Dorsolateral prefrontal cortex (tissue), 120 donors: ENCODE measurements at regions of chr10 and their contacts with region 1.

Region 1: DNA sequence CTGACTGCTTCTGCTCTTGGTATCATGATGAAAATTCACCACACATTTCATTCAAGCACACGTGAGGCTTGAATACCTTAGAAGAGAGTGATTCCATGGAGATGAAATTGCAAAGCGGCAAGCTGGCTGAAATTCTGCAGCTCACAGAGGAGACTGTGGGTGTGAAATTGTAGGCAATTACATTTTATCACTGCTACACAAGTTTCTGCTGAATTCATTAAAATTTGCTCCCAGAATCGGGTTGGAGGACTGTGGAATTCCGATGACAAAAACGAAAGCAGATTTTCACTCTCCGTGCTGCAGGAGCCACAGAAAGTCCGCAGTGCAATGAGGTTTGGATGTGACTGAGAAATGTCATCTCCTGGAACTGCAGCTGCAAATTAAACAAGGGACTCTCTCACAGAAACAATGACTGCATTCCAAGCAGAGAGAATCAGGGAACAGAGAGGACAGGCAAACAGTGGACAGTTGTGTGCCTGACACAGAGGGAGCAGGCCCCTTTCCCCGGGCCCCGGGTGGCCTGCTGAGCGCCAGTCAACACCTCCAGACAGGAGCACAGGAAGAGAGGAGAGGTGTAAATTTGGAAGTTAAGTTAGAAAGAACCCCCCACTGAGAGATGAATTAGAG is 109.1 kb downstream of the C10orf90 start:
- DNase-seq: peak in 9 of 10 donors; percentile 46 to 78 (median 62)
- H3K4me3 ChIP-seq: peak overlapping the region in 58 of 59 donors; percentile 4 to 65 (median 47)
- H3K27ac ChIP-seq: peak overlapping the region; percentile 86 to 100 (median 98)
- H3K27me3 ChIP-seq: no peaks in the 10 kb centered on the region
- CTCF ChIP-seq: peak in 13 of 56 donors; percentile 6 to 51 (median 20)

Region 2: GRCh38 chr10:126521354-126521753 is 40.1 kb before region 1 on chr10:
- intact Hi-C with region 1: loop called in 1 of 2 experiments (anchors 5 kb)
- DNase-seq: no peak
- H3K4me3 ChIP-seq: no peak overlapping the region
- H3K27ac ChIP-seq: peak overlapping the region in 5 of 59 donors; percentile 7 to 45 (median 34)
- H3K27me3 ChIP-seq: peaks cover 0 to 6% (median 0%) of the 10 kb centered on the region in 45 donors
- CTCF ChIP-seq: no peak

Region 3: GRCh38 chr10:126598003-126598402 is 36.6 kb after region 1 on chr10:
- intact Hi-C with region 1: loop called in 1 of 2 experiments (anchors 5 kb)
- DNase-seq: peak in 7 of 10 donors; percentile 38 to 75 (median 59)
- H3K4me3 ChIP-seq: no peak overlapping the region
- H3K27ac ChIP-seq: peak overlapping the region in 50 of 59 donors; percentile 4 to 87 (median 61)
- H3K27me3 ChIP-seq: no peaks in the 10 kb centered on the region
- CTCF ChIP-seq: peak in 54 of 56 donors; percentile 26 to 78 (median 52)

Region 4: DNA sequence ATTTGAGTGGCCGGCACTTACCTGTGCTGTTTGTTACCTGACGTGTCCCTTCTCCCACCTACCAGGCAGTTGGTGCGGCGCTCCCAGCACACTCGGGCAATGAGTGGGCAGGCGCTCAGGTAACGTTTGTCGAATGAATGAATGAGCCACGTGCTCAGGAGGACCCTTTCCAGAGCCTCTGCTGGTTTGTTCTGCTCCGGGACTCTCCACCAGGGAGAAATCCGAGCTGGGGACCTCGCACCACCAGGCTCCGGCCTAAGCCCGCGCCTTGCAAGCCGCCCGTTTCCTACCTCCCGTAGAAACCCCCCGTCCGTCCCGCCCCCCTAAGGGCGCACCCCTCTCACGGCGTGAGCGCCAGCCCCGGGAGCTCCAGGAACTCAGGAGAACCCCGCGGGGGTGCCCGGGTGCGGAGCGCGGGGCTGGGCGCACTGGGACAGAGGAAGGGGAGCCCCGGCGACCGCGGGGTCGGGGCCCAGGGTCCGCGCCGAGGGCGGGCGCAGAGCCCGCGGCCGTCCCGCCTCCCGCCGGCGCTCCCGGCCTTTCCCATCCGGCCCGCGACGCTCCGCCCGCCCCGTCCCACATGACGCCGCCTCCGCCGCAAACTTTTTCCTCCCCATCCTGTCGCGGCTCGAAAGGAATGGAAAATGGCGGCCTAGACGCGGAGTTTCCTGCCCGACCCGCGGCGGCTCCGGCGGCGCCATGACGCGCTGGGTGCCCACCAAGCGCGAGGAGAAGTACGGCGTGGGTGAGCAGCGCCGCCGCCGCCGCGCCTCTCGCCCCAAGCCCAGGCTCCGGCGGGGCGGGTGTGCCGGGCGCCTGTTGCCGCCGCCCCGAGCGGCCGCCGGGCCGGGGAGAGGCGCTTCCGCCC is 343.6 kb after region 1 on chr10 and contains the start of gene DOCK1:
- intact Hi-C with region 1: no loop called
- DNase-seq: peak in 4 of 10 donors; percentile 30 to 68 (median 52)
- H3K4me3 ChIP-seq: peak within 1 kb of the TSS; percentile 48 to 82 (median 71)
- H3K27ac ChIP-seq: peak within 1 kb of the TSS in 55 of 59 donors; percentile 29 to 90 (median 81)
- H3K27me3 ChIP-seq: peaks cover 0 to 36% (median 0%) of the 10 kb centered on the region in 45 donors
- CTCF ChIP-seq: peak in 3 of 56 donors; percentile 5 to 19 (median 12)
- total RNA-seq, gene DOCK1: 31.7 to 148 (median 56.3) TPM